ENCODE measurements at regions of chr10 and their contacts with region 1.

Region 1: GRCh38 chr10:71889388-71889987 is 38.4 kb upstream of the PSAP start:
- DNase-seq: no peak
- H3K4me3 ChIP-seq: peak overlapping the region; percentile 67
- CTCF ChIP-seq: no peak

Region 2: DNA sequence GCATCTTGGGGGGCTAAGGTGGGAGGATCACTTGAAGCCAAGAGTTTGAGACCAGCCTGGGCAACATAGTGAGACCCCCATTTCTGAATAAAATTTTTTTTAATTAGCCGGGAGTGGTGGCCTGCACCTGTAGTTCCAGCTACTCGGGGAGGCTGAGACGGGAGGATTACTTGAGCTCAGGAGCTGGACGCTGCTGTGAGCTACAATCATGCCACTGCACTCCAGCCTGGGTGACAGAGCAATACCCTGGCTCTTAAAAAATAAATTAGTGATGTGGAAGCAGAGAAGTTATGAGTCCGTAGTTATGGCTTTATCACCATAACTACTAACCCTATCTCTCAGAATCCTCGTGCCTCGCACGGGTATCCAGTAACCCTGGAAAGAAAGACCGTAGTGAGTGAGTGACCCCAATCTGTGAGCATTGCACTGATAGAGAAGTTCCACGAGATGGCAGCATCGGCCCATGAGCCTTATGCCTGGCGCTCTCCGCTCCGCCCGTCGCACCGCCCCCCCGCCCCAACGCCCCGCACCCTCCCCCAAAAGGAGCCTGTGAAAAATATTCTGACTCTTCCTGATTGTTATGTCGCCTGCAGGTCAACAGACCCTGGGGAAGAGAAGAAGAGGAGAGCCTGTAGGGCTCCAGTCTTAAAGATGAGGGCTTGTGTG is 575.3 kb before region 1 on chr10:
- CTCF ChIA-PET with region 1: interaction called, 30 read pairs
- POLR2A ChIA-PET with region 1: no interaction called
- DNase-seq: no peak
- H3K4me3 ChIP-seq: no peak overlapping the region
- CTCF ChIP-seq: peak; percentile 70

Region 3: DNA sequence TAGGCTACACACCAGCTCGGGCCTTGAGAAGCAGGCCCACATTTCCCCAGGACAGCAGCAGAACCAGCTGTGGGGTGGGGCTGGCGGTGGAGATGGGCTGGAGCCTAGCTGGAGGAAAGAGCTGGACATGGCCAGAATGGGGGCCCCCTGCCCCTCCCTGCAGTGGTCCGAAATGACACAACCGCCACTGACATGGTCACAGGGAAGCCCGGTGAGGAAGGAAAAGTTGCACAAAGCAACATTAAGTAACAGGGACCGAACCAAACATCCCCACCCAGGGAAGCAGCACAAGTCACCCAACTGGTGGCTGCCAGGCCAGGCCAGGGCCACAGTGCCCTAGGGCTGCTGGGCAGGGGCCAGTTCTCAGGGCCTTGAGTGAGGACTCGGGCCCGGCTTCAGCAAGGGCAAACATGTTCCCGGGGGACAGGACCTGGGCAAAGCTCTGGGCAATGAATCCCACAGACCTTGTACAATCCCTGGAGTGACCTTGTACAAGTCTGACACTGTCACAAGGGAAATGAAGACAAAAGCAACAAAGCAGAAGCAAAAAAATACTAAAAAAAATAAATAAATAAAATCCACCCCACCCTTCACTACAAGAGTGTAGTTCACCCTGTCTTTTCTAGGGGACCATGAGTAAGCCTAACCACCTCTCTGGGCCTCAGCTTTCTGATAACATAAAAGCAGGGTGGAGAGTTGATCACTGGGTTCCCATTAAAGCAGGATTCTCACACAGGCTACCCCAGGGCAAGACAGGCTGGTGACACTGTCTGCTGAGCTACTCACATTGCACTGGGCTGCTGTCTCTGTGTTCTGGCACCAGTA is 71.4 kb before region 1 on chr10:
- CTCF ChIA-PET with region 1: interaction called, 22 read pairs
- POLR2A ChIA-PET with region 1: no interaction called
- DNase-seq: no peak
- H3K4me3 ChIP-seq: no peak overlapping the region
- CTCF ChIP-seq: no peak

Region 4: GRCh38 chr10:71835671-71836595 is 53.6 kb before region 1 on chr10:
- CTCF ChIA-PET with region 1: interaction called, 38 read pairs
- POLR2A ChIA-PET with region 1: no interaction called
- DNase-seq: peak; percentile 70
- H3K4me3 ChIP-seq: no peak overlapping the region
- CTCF ChIP-seq: no peak

Region 5: GRCh38 chr10:71845410-71846405 is 43.8 kb before region 1 on chr10:
- CTCF ChIA-PET with region 1: interaction called, 20 read pairs
- POLR2A ChIA-PET with region 1: interaction called, 3 read pairs
- DNase-seq: no peak
- H3K4me3 ChIP-seq: no peak overlapping the region
- CTCF ChIP-seq: no peak

Region 6: DNA sequence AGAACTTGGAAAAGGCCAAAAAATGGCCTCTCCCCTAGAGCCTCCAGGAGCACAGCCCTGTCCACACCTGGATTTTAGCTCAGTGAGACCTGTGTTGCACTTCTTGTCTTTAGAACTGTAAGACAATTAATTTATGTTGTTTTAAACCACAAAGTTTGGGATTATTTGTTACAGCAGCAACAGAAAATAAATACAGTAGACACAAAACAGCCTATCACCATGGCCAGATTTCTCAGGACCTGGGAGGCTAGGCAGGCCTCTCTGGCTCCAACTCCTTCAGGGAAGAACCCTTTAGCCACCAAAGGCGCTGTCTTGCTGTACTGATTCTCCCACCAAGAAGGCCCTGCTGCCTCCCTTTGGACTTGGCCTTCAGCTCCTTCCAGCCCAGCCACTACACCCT is 15.7 kb after region 1 on chr10:
- CTCF ChIA-PET with region 1: interaction called, 44 read pairs
- POLR2A ChIA-PET with region 1: no interaction called
- DNase-seq: no peak
- H3K4me3 ChIP-seq: no peak overlapping the region
- CTCF ChIP-seq: no peak

Region 7: DNA sequence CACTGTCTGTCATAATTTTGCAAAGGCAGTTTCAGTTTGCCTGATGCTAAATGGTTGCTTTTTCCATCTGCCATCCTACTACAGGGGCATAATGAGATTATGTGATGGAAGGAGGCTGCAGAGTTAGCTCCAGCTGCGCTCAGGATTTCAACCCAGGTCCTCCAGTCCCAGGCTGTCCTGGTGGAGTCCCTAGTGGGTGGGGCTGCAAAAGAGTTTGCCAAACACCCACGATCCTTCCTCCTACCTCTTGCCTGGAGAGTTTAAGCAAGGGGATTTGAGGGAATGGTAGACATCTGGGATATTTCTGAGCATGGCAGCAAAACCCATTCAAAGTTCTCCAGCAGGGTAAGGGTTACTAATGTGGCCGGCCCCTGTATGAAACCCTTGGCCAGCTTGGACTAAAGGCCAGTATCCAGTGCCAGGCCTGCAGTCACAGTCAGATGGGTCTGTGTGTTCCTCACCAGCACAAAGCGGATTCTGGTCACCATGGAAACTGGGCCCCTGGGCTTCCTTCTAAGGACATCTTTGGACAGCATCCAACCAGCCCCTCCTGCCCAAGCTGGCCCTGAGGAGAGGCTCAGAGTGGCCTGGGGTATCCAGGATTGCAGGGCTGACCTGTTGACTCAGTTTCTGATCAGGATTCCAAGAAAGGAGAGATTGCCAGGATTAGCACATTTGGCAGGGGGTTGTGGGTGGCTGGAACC is 32.0 kb after region 1 on chr10:
- CTCF ChIA-PET with region 1: interaction called, 83 read pairs
- POLR2A ChIA-PET with region 1: no interaction called
- DNase-seq: no peak
- H3K4me3 ChIP-seq: no peak overlapping the region
- CTCF ChIP-seq: no peak

Measured in AG04449 (cell line).